ENCODE measurements at regions of chr7 and their contacts with region 1.

Region 1: GRCh38 chr7:110186331-110186730 is 904.6 kb upstream of the LRRN3 start:
- DNase-seq: no peak
- H3K4me3 ChIP-seq: no peak overlapping the region
- H3K27ac ChIP-seq: no peak overlapping the region
- H3K4me1 ChIP-seq: no peaks in the 10 kb centered on the region
- H3K27me3 ChIP-seq: no peaks in the 10 kb centered on the region
- CTCF ChIP-seq: no peak

Region 2: GRCh38 chr7:110264288-110264687 is 78.0 kb after region 1 on chr7:
- CTCF ChIA-PET with region 1: no interaction called
- POLR2A ChIA-PET with region 1: interaction called, 26 read pairs
- intact Hi-C with region 1: no loop called
- DNase-seq: no peak
- H3K4me3 ChIP-seq: no peak overlapping the region
- H3K27ac ChIP-seq: no peak overlapping the region
- H3K4me1 ChIP-seq: no peaks in the 10 kb centered on the region
- H3K27me3 ChIP-seq: no peaks in the 10 kb centered on the region
- CTCF ChIP-seq: no peak

Measured in PC-9 (cell line).